Activated naive CD4-positive, alpha-beta T cell treated with anti-CD3 and anti-CD28 coated beads for 36 hours (primary cell): ENCODE measurements at regions of chr4 and their contacts with region 1.

Region 1: GRCh38 chr4:13548984-13549546 is 4.8 kb upstream of the NKX3-2 start:
- DNase-seq: peak; percentile 94
- H3K4me3 Mint-ChIP-seq: peak overlapping the region; percentile 69
- H3K27ac Mint-ChIP-seq: no peak overlapping the region
- H3K4me1 Mint-ChIP-seq: peaks cover 28% of the 10 kb centered on the region
- H3K27me3 Mint-ChIP-seq: peaks cover 65% of the 10 kb centered on the region

Region 2: DNA sequence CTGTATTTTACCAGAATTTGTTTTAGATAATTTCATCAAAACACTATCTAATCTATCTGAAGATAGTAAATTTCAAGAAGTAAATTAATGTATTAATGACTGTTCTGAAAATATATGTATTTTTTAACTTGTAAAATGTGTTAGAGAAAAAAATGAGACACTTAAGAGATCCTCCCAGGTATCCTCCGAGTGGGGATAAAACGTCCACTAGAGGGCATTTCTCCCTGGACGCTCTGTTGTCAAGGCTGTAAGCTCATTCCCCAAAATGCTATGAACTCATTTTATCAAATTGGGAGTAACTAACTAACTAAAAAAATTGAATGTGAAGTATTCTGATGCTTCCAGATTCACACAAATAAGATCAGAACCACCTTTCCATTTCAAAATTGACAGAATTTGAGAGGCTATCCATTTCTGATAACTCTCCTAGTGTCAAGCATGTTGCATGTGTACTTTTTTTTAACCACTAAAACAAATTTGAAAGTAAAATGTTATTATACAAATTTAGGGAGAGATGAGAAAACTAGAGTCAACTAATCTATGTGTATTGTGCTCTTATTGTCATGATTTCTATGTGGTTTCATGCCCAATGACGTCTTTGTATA is 1783.1 kb before region 1 on chr4:
- CTCF ChIA-PET with region 1: no interaction called
- intact Hi-C with region 1: loop called (anchors 2 kb)
- DNase-seq: peak; percentile 32
- H3K4me3 Mint-ChIP-seq: no peak overlapping the region
- H3K27ac Mint-ChIP-seq: no peak overlapping the region
- H3K4me1 Mint-ChIP-seq: no peaks in the 10 kb centered on the region
- H3K27me3 Mint-ChIP-seq: peaks cover 6% of the 10 kb centered on the region

Region 3: DNA sequence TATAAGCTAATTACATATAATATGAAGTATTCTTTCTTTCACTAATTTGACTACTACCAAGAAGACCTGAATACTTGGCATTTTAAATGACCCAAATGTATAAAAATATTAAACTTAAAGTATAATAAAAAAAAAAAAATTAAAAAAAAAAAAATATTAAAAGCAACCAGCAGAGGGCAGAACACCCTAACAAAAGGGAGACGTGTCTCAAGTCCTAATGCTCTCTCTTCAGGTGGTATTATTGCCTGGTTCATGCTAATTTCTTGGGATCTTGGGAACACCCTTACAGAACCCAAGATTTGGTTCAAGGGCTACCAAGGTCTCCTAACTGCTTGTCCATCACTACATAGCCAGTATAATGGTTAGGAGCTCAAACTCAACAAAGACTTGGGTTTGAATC is 819.7 kb before region 1 on chr4:
- CTCF ChIA-PET with region 1: interaction called, 3 read pairs
- intact Hi-C with region 1: loop called (anchors 1 kb)
- DNase-seq: no peak
- H3K4me3 Mint-ChIP-seq: no peak overlapping the region
- H3K27ac Mint-ChIP-seq: no peak overlapping the region
- H3K4me1 Mint-ChIP-seq: no peaks in the 10 kb centered on the region
- H3K27me3 Mint-ChIP-seq: peaks cover 23% of the 10 kb centered on the region

Region 4: GRCh38 chr4:13193662-13194061 is 355.4 kb before region 1 on chr4:
- CTCF ChIA-PET with region 1: no interaction called
- intact Hi-C with region 1: loop called (anchors 10 kb)
- DNase-seq: no peak
- H3K4me3 Mint-ChIP-seq: no peak overlapping the region
- H3K27ac Mint-ChIP-seq: no peak overlapping the region
- H3K4me1 Mint-ChIP-seq: no peaks in the 10 kb centered on the region
- H3K27me3 Mint-ChIP-seq: no peaks in the 10 kb centered on the region

Region 5: DNA sequence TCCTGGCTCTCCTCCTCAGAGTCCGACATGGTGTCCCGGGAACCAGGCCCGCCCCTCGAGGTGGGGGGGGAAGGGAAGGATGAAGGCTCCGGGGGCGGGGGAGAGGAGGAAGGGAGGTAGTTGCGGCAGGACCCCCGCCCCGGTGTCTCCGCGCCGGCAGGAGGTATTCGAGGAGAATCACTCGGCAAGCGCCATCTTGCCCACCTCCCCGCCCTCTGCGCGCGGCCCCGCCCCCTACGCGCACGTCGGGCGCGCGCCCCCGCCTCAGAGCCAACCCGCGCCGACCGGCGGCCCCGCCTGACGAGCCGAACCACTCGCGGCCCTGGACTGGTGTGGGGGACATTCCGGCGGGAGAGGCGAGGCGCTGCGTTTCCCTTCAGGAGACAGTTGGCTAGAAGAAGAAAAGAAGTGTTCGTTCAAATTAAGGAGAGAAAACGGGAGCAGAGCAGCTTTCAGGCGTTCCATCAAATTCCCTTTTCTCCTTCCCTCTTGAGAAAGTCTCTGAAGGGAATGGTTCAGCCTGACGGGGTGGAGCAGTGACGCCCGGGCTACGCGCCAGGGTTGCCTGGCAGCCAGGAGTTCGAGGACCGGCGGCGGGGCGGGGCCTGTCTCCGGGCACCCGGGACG is 64.8 kb before region 1 on chr4 and contains the start of gene RAB28:
- CTCF ChIA-PET with region 1: interaction called, 3 read pairs
- intact Hi-C with region 1: loop called (anchors 1 kb)
- DNase-seq: peak; percentile 92
- H3K4me3 Mint-ChIP-seq: peak within 1 kb of the TSS; percentile 89
- H3K27ac Mint-ChIP-seq: peak within 1 kb of the TSS; percentile 98
- H3K4me1 Mint-ChIP-seq: peaks cover 25% of the 10 kb centered on the region
- H3K27me3 Mint-ChIP-seq: peaks cover 3% of the 10 kb centered on the region
- total RNA-seq, gene RAB28: 15.6 to 16.7 TPM